Right lobe of liver (tissue), 6 donors: ENCODE measurements at regions of chr17 and their contacts with region 1.

Region 1: DNA sequence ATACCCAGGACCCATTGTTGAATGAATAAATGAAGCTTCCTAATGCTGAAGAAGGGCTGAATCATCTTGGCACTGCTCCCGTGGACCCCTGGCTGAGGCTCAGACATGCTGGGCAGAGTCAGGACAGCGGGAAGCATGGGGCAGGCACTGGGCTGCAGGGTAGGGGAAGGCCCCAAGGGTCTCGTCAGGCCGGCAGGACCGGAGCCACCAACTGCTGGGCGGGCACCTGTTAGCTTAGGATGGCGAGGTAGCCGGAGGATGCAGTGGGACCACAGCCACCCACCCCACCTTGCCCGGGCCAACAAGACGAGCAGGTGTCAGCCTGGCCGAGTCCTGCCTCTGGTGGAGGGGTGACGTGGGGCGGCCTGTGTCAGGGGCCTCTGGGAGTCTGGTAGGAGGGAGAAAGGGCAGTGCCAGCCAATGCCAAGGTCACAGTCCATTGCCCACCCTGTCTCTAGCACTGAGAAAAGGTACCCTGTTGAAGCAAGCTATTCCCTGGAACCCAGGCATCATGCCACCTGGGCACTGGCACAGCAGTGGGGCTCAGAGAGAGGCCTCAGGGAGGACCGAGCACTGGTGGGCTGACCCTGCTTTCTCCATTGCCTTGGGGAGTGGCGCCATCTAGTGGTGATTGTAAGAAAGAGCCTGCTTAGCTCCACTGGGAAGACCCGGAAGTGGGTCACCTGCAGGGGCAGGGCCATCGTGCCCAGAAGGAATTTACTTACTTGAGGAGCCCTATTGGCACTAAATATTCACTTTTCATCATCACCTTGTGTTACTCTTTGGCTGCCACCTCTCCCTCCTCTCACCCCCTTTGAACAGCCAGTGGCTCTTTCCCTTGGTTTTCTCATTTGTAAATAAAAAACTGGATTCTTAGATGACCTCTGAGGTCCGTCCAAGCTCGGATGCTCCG is 3.0 kb upstream of the DLX3 start:
- DNase-seq: peak; percentile 71 to 77 (median 75)
- ATAC-seq: peak; percentile 74 to 87 (median 80)
- H3K4me3 ChIP-seq: no peak overlapping the region
- H3K27ac ChIP-seq: no peak overlapping the region
- H3K4me1 ChIP-seq: peaks cover 0 to 25% (median 2%) of the 10 kb centered on the region in 4 donors
- H3K27me3 ChIP-seq: peaks cover 0 to 34% of the 10 kb centered on the region in 2 donors
- CTCF ChIP-seq: peak; percentile 89 to 99 (median 97)
- POLR2A ChIP-seq: no peak

Region 2: GRCh38 chr17:49861150-49861892 is 136.7 kb before region 1 on chr17:
- intact Hi-C with region 1: loop called (anchors 5 kb)
- DNase-seq: no peak
- ATAC-seq: peak; percentile 52 to 65 (median 62)
- H3K4me3 ChIP-seq: no peak overlapping the region
- H3K27ac ChIP-seq: no peak overlapping the region
- H3K4me1 ChIP-seq: no peaks in the 10 kb centered on the region
- H3K27me3 ChIP-seq: no peaks in the 10 kb centered on the region
- CTCF ChIP-seq: peak; percentile 57 to 83 (median 80)
- POLR2A ChIP-seq: no peak

Region 3: DNA sequence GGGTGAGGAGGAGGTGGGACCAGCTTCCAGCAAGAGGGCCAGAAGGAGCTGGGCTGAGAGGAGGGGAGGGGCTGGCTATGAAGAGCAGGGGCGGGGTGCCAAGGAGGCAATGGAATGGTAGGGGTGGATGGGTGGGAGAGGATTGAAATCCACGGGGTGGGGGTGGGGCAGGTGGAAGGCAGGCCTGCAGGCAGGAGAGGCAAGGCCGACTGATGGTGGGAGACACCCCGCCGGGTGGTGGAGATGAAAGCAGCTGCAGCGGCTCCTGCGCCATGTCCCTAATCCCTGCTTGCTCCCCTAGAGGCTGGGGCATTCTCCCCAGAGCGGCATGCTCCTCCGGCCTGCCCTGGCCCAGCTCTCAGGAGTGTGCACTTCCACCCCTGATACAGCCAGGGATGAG is 122.4 kb before region 1 on chr17:
- intact Hi-C with region 1: loop called in 1 of 2 experiments (anchors 5 kb)
- DNase-seq: no peak
- ATAC-seq: no peak
- H3K4me3 ChIP-seq: no peak overlapping the region
- H3K27ac ChIP-seq: no peak overlapping the region
- H3K4me1 ChIP-seq: no peaks in the 10 kb centered on the region
- H3K27me3 ChIP-seq: no peaks in the 10 kb centered on the region
- CTCF ChIP-seq: no peak
- POLR2A ChIP-seq: no peak